Activated B cell treated with CpG ODN at 0.5 μM for 24 hours (primary cell): ENCODE measurements at regions of chr1 and their contacts with region 1.

Region 1: DNA sequence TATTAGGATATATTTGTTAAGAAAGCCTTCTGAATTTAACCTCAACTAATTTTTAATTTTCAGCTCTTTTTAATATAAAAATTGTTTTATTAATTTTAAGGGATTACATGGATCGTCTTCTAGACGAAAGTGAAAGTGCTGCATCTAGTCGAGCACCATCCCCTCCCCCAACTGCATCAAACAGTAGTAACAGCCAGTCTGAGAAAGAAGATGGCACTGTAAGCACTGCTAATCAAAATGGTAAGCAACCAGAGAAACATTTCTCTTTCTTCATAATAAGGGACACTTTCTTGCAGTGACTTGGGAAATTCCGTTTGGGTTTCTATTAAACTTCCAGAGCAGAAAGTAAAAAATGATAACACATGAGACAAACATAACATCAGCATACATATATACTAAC is 56.9 kb downstream of the MIER1 start:
- DNase-seq: no peak
- ATAC-seq: peak; percentile 52
- H3K4me3 Mint-ChIP-seq: no peak overlapping the region
- H3K27ac Mint-ChIP-seq: peak overlapping the region; percentile 42
- H3K4me1 Mint-ChIP-seq: peaks cover 19% of the 10 kb centered on the region
- H3K27me3 Mint-ChIP-seq: no peaks in the 10 kb centered on the region
- CTCF ChIP-seq: no peak

Region 2: DNA sequence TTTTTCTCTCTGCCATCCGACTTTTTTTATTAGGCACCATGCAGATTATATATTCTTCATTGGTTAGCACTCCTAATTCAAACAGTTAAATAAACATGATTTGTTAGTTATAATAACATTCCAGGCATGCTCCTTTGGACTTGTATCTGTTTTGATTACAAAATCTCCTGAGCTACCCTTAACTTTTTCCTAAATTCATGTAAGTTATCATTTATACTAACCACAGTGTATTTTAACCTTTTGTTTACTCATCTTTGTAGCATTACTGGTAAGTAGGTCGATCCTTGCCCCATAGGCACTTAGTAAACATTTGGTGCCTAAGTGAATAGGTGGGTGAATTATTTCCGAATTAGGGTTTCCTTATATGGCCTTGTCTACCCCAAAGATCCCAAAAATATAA is 13.1 kb before region 1 on chr1:
- CTCF ChIA-PET with region 1: no interaction called
- POLR2A ChIA-PET with region 1: no interaction called
- intact Hi-C with region 1: loop called (anchors 1 kb)
- DNase-seq: no peak
- ATAC-seq: no peak
- H3K4me3 Mint-ChIP-seq: no peak overlapping the region
- H3K27ac Mint-ChIP-seq: no peak overlapping the region
- H3K4me1 Mint-ChIP-seq: no peaks in the 10 kb centered on the region
- H3K27me3 Mint-ChIP-seq: no peaks in the 10 kb centered on the region
- CTCF ChIP-seq: no peak

Region 3: DNA sequence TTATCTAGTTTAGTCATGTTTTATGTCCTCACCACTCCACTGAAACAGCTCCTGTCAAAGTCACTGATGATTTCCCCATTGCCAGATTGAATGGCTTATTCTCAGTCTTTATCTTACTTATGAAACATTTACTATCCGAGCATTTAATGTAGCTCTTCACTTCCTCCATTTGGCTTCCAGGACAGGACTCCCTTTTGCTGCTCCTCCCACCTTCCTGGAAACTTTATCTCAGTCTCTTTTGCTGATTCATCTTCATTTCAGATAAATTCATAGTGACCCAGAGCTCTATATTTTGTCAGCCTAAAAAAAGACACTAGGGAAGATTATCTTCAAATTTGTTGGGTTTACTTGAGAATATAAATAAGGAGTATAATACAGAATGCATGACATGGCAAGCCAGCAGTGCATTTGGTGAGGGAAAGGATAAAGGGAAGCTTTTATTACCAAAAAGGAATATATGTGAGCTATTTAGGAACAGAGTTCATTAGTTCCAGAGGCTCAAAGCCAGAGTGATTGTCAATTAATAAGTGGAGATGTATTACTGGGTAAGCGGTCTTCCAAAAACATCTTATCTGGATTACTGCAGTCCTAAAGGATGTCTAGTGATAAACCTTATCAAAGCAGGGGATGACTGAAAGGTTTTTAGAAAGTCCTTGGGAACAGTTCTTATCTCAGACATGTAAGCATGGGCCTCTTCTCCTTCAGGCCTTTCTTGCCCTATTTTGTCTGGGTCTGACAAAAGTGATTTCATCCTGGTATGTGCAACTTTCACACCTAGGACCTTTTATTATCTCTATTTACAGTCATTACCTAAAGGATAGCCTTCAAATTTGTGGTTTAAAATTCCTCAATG is 210.2 kb after region 1 on chr1:
- CTCF ChIA-PET with region 1: no interaction called
- POLR2A ChIA-PET with region 1: no interaction called
- intact Hi-C with region 1: no loop called
- DNase-seq: no peak
- ATAC-seq: no peak
- H3K4me3 Mint-ChIP-seq: no peak overlapping the region
- H3K27ac Mint-ChIP-seq: no peak overlapping the region
- H3K4me1 Mint-ChIP-seq: no peaks in the 10 kb centered on the region
- H3K27me3 Mint-ChIP-seq: no peaks in the 10 kb centered on the region
- CTCF ChIP-seq: no peak